CD8-positive, alpha-beta memory T cell (primary cell): ENCODE measurements at regions of chr9 and their contacts with region 1.

Region 1: DNA sequence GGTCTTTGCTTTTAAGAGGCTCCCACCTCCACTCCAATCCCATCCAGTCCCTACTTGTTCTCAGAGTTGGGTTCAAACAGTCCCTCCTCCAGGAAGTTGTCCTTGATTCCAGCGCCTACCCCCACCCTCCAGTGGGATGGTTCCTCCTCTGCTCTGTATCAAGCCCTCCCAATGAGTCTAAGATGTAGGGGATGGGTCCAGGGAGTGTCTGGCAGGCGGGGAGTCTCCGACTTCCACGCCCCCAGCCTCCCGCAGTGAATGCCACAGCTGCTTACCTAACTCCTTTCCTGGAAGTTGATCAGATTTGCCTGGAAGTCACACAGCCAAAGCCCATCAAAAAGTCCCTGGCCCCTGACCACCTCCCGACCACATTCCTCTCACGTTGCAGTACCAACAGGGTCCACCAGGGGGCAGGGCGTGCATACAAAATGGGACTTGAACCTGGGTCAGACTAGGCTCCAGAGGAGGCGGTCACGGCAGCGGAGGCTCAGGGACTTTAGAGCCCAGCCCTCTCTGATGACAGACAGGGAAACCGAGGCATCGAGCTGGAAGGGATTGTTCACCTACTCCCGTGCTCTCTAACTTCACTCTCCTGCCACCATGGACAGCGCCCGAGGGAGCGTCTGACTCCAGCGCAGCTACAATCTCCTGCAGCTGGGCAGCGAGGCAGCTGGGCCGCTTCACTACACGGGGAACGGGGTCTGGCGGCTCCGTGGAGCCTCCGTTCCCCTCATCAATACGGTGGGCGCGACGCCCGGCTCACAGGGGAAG is 25.0 kb upstream of the TDRD7 start:
- DNase-seq: peak; percentile 42 to 75 (median 59)
- H3K4me3 ChIP-seq: no peak overlapping the region
- H3K4me3 Mint-ChIP-seq: peak overlapping the region in 1 of 7 donors; percentile 61
- H3K27ac ChIP-seq: no peak overlapping the region
- H3K27ac Mint-ChIP-seq: peak overlapping the region in 1 of 8 donors; percentile 79
- H3K4me1 ChIP-seq: peaks cover 5% of the 10 kb centered on the region
- H3K4me1 Mint-ChIP-seq: peaks cover 4 to 10% (median 5%) of the 10 kb centered on the region in 3 donors
- H3K27me3 ChIP-seq: no peaks in the 10 kb centered on the region
- H3K27me3 Mint-ChIP-seq: peaks cover 10 to 12% of the 10 kb centered on the region in 2 donors

Region 2: DNA sequence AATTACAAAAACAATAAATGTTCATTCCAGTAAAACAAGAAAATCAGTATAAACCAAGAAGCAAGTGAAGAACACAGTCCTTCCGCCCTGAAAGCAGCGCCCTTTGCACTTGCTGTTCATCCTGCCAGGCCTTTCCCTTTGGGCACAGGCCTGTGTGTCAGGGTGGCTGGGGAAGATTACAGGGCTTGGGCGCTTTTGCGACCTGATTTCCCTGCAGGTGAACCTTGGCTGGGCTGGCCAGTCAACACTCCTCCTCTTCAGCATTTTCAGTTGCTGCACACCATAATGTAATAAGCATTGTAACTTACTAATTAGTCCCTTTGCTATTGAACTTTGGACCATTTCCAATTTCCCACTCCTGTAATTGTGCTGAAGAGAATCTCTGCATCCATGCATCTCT is 13.6 kb before region 1 on chr9:
- CTCF ChIA-PET with region 1: interaction called, 23 read pairs
- POLR2A ChIA-PET with region 1: no interaction called
- DNase-seq: no peak
- H3K4me3 ChIP-seq: no peak overlapping the region
- H3K4me3 Mint-ChIP-seq: no peak overlapping the region
- H3K27ac ChIP-seq: no peak overlapping the region
- H3K27ac Mint-ChIP-seq: no peak overlapping the region
- H3K4me1 ChIP-seq: no peaks in the 10 kb centered on the region
- H3K4me1 Mint-ChIP-seq: no peaks in the 10 kb centered on the region
- H3K27me3 ChIP-seq: no peaks in the 10 kb centered on the region
- H3K27me3 Mint-ChIP-seq: no peaks in the 10 kb centered on the region

Region 3: GRCh38 chr9:97406620-97407177 is 19.8 kb after region 1 on chr9:
- CTCF ChIA-PET with region 1: no interaction called
- POLR2A ChIA-PET with region 1: no interaction called
- DNase-seq: no peak
- H3K4me3 ChIP-seq: no peak overlapping the region
- H3K4me3 Mint-ChIP-seq: no peak overlapping the region
- H3K27ac ChIP-seq: no peak overlapping the region
- H3K27ac Mint-ChIP-seq: no peak overlapping the region
- H3K4me1 ChIP-seq: peaks cover 4% of the 10 kb centered on the region
- H3K4me1 Mint-ChIP-seq: peaks cover 4 to 6% (median 6%) of the 10 kb centered on the region in 3 donors
- H3K27me3 ChIP-seq: peaks cover 4% of the 10 kb centered on the region
- H3K27me3 Mint-ChIP-seq: peaks cover 20 to 44% of the 10 kb centered on the region in 2 donors